Upper lobe of right lung (tissue), 1 donor: ENCODE measurements at regions of chr1 and their contacts with region 1.

Region 1: DNA sequence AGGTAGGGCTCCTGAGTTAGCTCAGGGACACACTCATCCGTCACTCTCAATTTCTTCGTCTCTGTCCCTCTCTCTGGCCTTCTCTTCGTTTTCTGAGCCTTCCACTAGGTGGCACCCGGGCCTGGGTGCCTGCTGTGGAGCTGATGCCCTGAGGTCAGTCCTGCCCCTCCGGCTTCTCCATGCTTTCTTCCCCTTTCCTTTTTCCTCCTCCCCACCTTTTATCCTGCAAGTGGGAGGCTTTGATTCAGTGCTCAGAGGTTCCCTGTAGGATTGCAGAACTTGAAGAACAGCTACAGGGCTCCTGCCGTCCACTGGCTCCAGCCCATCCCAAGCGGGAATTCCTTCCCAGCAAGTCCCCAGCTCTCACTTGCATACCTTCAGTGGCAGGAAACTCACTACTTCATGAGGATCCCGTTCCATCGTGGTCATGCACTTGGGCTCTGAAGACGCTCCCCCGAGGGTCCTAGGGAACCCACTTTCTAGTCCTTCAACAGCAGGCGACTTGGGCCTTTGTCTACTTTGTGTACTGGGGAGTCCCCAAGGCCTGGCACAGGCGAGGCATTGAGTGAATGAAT is 45.6 kb downstream of the SRRM1 start:
- DNase-seq: peak; percentile 81
- ATAC-seq: peak; percentile 97
- H3K4me3 ChIP-seq: no peak overlapping the region
- H3K27ac ChIP-seq: no peak overlapping the region
- H3K4me1 ChIP-seq: peaks cover 17% of the 10 kb centered on the region
- H3K27me3 ChIP-seq: no peaks in the 10 kb centered on the region
- CTCF ChIP-seq: peak; percentile 90

Region 2: GRCh38 chr1:24228311-24228710 is 460.4 kb before region 1 on chr1:
- intact Hi-C with region 1: no loop called
- DNase-seq: no peak
- ATAC-seq: no peak
- H3K4me3 ChIP-seq: no peak overlapping the region
- H3K27ac ChIP-seq: no peak overlapping the region
- H3K4me1 ChIP-seq: no peaks in the 10 kb centered on the region
- H3K27me3 ChIP-seq: no peaks in the 10 kb centered on the region
- CTCF ChIP-seq: no peak

Region 3: GRCh38 chr1:24828887-24829192 is 140.1 kb after region 1 on chr1:
- intact Hi-C with region 1: loop called (anchors 5 kb)
- DNase-seq: no peak
- ATAC-seq: no peak
- H3K4me3 ChIP-seq: no peak overlapping the region
- H3K27ac ChIP-seq: no peak overlapping the region
- H3K4me1 ChIP-seq: peaks cover 33% of the 10 kb centered on the region
- H3K27me3 ChIP-seq: no peaks in the 10 kb centered on the region
- CTCF ChIP-seq: no peak